Lower leg skin (tissue), 4 donors: ENCODE measurements at regions of chr10 and their contacts with region 1.

Region 1: GRCh38 chr10:88553116-88553752 is 29.9 kb downstream of the RNLS start:
- DNase-seq: peak in 1 of 2 donors; percentile 56
- H3K4me3 ChIP-seq: no peak overlapping the region
- CTCF ChIP-seq: no peak
- POLR2A ChIP-seq: no peak

Region 2: DNA sequence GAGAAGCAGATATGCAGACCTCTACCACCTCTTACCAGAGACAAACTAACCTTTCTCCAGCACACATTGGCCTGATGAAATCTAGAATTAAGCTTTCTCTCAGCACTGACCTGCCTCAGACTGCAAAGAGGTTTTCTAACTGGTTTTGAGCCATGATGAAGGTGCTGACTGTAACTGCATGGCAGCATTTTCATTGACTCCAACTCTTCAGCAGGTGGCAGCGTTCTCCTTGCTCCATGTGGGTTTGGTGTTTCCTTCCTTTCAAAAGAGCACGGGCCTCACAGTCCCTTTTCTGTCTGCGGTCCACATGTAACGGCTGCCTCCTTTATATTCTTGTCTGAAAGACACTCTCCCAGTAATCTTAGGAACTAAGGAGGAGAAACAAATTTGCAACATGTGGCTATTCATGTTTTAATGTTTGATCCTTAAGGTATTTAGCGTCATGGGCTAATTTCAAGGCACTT is 702.5 kb before region 1 on chr10:
- intact Hi-C with region 1: loop called (anchors 10 kb)
- DNase-seq: peak in 1 of 2 donors; percentile 38
- H3K4me3 ChIP-seq: no peak overlapping the region
- CTCF ChIP-seq: no peak
- POLR2A ChIP-seq: no peak

Region 3: DNA sequence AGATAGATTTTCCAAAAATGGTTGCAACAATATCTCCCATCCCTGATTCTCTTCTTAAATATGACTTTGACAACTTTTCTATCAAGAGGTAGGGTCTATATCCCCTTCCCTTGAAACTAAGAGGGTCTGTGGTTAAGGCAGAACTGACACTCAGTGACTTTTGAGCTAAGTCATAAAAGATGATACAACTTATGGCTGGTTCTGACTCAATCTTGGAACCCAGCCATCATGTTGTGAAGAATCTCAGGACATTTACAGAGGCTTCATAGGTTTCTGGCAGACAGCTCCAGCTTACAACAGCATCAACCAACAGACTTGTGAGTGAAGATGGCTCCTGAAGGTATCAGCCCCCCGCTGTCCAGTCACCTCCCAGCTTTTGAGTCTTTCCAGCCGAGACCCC is 173.7 kb before region 1 on chr10:
- intact Hi-C with region 1: no loop called
- DNase-seq: no peak
- H3K4me3 ChIP-seq: no peak overlapping the region
- CTCF ChIP-seq: no peak
- POLR2A ChIP-seq: no peak

Region 4: DNA sequence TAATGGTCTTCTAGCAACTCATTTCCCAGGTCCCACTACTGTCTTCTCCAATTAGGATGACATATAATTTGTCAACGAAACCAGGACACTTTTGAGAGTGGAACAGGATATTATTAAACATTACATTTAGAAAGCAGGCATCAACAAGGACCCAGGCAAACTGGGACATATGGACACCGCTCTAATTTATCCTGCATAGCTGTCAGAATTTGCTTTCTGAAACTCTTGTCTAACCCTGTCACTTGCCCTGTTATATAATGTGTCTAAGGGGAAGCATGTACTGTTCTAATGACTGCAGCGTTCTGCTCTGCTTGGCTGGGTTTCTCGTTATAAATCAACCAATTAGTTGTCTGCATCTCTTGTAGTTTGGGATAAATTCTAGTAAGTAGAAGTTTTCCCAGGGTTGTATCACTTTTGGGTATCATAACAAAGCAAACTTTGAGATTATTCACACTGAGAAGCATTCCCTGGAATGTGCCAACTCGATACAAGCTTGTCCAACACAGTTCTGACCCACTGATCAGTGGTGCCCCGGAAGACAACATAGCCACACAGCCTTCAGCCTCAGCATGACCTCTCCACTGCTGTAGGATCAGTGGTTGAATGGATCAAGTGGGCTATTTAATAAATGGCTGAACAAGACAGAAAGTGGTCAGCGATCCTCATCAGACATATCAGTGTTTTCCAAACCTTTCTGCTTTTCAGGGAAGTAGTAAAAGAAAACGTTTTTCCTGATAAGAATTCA is 1376.2 kb after region 1 on chr10:
- intact Hi-C with region 1: no loop called
- DNase-seq: no peak
- H3K4me3 ChIP-seq: no peak overlapping the region
- CTCF ChIP-seq: no peak
- POLR2A ChIP-seq: no peak